ENCODE measurements at regions of chr11 and their contacts with region 1.

Region 1: DNA sequence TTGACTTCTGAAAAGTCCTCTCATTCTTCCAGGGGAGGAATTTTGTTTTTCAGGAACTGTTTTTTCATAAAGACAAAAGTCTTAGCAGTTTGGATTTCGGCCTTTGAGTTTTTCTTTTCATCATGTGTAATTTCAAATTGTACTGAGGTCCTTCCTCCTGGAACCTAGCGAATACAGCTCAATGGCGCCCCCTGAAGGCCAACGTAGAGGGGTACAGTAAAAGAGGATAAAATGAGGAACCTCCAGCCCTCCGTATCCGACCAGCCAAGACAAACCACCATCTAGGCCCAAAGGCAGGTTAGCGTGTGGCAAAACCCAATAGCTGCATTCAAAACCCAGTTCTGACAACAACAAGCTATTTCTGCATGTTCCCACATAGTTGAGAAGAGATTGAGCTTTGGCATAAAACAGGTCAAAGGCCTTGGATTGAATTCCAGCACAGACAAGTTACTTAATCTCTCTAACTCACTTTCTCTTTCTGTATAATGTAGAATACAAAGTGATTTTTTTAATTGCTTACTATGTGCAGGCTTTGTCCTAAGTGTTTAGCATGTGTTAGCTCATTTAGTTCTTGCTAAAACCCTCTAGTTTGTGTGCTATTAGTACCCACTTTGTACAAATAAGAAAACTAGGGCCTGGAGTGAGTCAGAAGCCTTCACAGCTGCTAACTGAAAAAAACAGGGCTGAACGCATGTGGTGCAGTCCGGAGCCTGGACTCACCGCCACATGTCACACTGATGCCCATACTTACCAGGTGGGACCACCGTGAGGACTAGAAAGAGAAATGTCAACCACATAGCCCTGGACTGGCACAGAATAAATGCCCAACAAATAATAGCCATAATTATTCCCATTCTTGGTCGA is 43.2 kb upstream of the ETS1 start:
- DNase-seq: peak; percentile 95
- ATAC-seq: peak; percentile 78
- H3K4me3 Mint-ChIP-seq: peak overlapping the region; percentile 72
- H3K27ac Mint-ChIP-seq: peak overlapping the region; percentile 84
- H3K4me1 Mint-ChIP-seq: peaks cover 69% of the 10 kb centered on the region
- H3K27me3 Mint-ChIP-seq: peaks cover under 1% of the 10 kb centered on the region

Region 2: DNA sequence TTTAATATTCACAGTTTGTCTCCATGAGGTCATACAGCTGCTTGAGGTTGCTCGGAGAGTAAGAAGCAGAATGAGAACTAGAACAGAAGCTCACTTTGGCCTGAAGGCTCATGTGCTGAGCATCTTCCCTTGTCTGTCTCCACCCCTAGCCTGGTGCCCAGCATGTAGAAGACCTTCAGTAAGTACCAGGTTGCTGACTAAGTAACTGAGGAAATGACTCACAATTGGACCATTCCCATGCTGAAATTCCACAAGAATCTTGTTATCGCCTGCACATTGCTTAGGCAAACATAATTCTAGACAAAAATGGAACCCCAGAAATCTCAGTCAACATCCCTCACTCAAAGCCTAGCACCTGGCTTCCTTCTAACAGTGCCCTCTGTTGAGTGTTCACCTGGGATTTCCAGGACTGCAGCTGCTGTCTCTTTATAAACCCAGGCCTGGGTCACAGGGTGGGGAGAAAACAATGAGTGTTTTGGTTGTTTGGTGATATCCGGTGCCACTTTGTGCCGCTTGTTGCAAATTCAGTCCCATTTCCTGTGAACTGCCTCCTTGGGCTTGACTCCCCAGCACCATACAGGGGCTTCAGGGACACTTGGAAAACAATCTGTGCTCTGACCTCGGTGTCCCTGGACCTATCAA is 450.0 kb before region 1 on chr11:
- CTCF ChIA-PET with region 1: interaction called, 206 read pairs
- POLR2A ChIA-PET with region 1: no interaction called
- DNase-seq: no peak
- ATAC-seq: no peak
- H3K4me3 Mint-ChIP-seq: no peak overlapping the region
- H3K27ac Mint-ChIP-seq: no peak overlapping the region
- H3K4me1 Mint-ChIP-seq: peaks cover 20% of the 10 kb centered on the region
- H3K27me3 Mint-ChIP-seq: peaks cover 4% of the 10 kb centered on the region

Region 3: GRCh38 chr11:128302425-128303186 is 328.0 kb before region 1 on chr11:
- CTCF ChIA-PET with region 1: interaction called, 11 read pairs
- POLR2A ChIA-PET with region 1: interaction called, 17 read pairs
- DNase-seq: peak; percentile 90
- ATAC-seq: peak; percentile 90
- H3K4me3 Mint-ChIP-seq: peak overlapping the region; percentile 89
- H3K27ac Mint-ChIP-seq: peak overlapping the region; percentile 96
- H3K4me1 Mint-ChIP-seq: peaks cover 79% of the 10 kb centered on the region
- H3K27me3 Mint-ChIP-seq: no peaks in the 10 kb centered on the region

Region 4: DNA sequence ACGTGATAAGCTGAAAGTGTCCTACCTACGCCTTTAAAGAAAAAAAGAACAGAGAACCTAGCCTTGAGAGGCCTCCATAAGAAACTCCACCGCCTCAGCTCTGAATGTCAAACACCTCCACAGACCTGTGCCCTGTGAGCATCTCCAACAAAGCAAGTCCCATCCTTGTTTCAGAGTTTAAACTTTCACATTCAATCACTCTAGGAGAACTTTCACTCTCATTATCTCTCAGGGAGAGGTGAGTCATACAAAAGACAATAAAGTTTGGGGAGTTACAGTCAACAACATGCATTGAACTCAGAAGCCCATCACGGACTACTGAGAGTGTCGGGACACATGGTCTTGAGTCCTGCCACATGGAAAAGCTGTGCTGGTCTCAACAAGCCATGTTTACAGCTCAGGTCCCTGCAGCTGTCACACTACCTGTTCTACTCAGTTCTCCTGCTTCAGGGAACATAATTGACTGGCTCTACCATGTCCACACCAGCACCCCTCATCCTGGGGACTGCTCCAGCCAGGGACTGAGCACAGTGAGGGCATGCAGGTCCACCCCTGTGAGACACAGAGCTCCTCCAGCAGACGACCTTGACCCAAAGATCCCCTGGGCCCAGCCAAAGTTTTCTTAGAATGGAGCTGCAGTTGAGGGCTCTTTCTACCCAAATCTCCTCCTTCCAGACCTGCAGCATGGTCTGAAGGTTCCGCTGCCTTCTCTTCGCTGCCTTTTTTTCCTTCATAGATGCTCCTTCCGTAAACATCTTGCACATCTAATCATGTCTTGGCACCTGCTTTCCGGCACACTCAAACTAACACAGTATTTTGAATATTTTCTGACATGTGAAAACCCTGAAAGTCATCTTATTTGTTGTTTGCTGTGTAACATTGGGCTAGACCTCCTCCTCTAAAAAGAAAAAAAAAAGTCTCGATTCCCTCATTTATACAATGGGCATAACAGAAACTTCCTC is 158.2 kb before region 1 on chr11:
- CTCF ChIA-PET with region 1: interaction called, 118 read pairs
- POLR2A ChIA-PET with region 1: interaction called, 10 read pairs
- DNase-seq: peak; percentile 69
- ATAC-seq: peak; percentile 55
- H3K4me3 Mint-ChIP-seq: peak overlapping the region; percentile 56
- H3K27ac Mint-ChIP-seq: peak overlapping the region; percentile 85
- H3K4me1 Mint-ChIP-seq: peaks cover 98% of the 10 kb centered on the region
- H3K27me3 Mint-ChIP-seq: no peaks in the 10 kb centered on the region

Region 5: GRCh38 chr11:128506999-128507611 is 123.5 kb before region 1 on chr11:
- CTCF ChIA-PET with region 1: interaction called, 247 read pairs
- POLR2A ChIA-PET with region 1: interaction called, 40 read pairs
- DNase-seq: no peak
- ATAC-seq: peak; percentile 7
- H3K4me3 Mint-ChIP-seq: peak overlapping the region; percentile 78
- H3K27ac Mint-ChIP-seq: peak overlapping the region; percentile 96
- H3K4me1 Mint-ChIP-seq: peaks cover 97% of the 10 kb centered on the region
- H3K27me3 Mint-ChIP-seq: no peaks in the 10 kb centered on the region

Region 6: GRCh38 chr11:128757235-128757711 is 126.7 kb after region 1 on chr11:
- CTCF ChIA-PET with region 1: interaction called, 78 read pairs
- POLR2A ChIA-PET with region 1: no interaction called
- DNase-seq: peak; percentile 84
- ATAC-seq: peak; percentile 91
- H3K4me3 Mint-ChIP-seq: no peak overlapping the region
- H3K27ac Mint-ChIP-seq: peak overlapping the region; percentile 87
- H3K4me1 Mint-ChIP-seq: peaks cover 76% of the 10 kb centered on the region
- H3K27me3 Mint-ChIP-seq: no peaks in the 10 kb centered on the region